ENCODE measurements at regions of chr4 and their contacts with region 1.

Region 1: DNA sequence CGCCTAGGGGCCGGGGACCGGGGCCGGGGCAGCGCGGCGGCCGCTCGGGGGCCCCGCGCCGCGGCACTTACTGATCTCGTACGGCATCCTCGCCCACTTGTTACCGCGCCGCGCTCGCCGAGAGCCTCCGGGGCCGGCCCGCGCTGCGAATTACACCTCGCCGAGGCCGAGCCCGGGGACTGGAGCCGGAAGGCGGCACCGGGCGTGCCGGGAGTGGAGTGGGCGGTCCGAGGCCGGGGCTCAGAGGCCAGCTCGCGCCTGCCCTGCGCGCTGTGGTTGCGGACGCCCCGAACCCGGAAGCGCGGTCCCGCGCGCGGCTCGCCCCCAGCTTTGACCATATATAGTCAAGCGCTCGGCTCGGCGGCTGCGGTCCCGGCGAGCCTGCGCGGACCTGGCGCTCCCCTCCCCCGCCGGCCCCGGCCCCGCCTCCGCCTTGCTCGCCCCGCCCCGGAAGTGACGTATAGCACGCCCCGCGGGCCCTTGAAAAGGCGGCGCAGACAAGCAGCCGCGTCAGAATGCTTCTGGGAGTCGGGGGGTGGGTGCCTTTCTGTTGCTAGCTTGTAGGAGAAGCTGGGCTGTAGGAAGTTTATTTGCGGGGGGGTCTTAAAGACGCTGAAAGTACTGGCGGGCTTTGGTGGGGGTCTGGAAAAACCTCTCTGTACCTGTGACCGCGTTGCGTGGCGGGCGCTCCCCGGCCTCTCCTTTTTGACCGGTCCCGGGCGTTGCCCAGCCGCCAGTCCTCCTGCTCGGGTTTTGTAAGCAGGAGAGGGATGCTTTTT is at the start of gene WDR1:
- DNase-seq: peak; percentile 95
- ATAC-seq: peak; percentile 85
- H3K4me3 ChIP-seq: peak within 1 kb of the TSS; percentile 74 to 90 (median 82)
- H3K4me3 Mint-ChIP-seq: peak within 1 kb of the TSS; percentile 95
- H3K27ac ChIP-seq: peak within 1 kb of the TSS; percentile 98
- H3K27ac Mint-ChIP-seq: peak within 1 kb of the TSS; percentile 96
- H3K4me1 ChIP-seq: peaks cover 27 to 50% of the 10 kb centered on the region in 2 donors
- H3K4me1 Mint-ChIP-seq: peaks cover 58% of the 10 kb centered on the region
- H3K27me3 ChIP-seq: no peaks in the 10 kb centered on the region
- H3K27me3 Mint-ChIP-seq: no peaks in the 10 kb centered on the region
- CTCF ChIP-seq: no peak
- total RNA-seq, gene WDR1: 198 and 217 TPM in 2 replicates

Region 2: DNA sequence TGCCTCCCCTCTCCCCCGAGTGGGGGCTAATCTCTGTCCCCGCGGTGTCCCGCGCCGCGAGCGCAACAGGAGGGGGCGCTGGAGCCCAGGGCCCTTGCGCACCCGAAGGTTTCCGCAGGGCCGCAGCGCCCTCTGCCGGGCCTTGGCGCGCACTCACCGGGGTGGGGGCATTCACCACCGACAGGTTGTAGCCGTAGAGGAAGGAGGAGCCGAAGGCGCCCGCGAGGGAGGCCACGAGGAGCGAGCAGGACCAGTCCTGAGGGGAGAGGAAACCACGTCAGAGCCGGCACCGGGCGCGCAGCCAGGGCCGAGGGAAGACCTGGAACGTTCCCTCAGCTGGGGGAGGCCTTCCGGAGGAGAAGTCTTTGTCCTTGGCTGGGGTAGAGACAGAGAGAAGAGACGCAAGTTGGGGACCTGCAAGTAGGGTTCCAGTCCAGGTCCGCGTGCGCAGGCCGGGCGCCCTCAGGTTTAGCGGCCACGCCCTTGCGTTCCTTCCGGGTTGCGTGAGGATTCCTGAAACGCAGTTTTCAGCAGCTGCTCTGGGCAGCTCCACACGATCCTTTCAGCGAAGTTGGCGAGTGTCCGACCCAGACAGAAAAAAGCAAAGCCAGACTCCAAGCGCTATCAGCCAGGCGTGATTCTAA is 97.8 kb before region 1 on chr4:
- CTCF ChIA-PET with region 1: interaction called, 4 read pairs
- POLR2A ChIA-PET with region 1: no interaction called
- intact Hi-C with region 1: loop called (anchors 2 kb)
- DNase-seq: peak; percentile 89
- ATAC-seq: peak; percentile 98
- H3K4me3 ChIP-seq: peak overlapping the region; percentile 27 to 66 (median 64)
- H3K4me3 Mint-ChIP-seq: peak overlapping the region; percentile 91
- H3K27ac ChIP-seq: peak overlapping the region; percentile 73 to 77
- H3K27ac Mint-ChIP-seq: peak overlapping the region; percentile 89
- H3K4me1 ChIP-seq: peaks cover 22 to 42% of the 10 kb centered on the region in 2 donors
- H3K4me1 Mint-ChIP-seq: peaks cover 46% of the 10 kb centered on the region
- H3K27me3 ChIP-seq: no peaks in the 10 kb centered on the region
- H3K27me3 Mint-ChIP-seq: no peaks in the 10 kb centered on the region
- CTCF ChIP-seq: peak; percentile 98

Region 3: DNA sequence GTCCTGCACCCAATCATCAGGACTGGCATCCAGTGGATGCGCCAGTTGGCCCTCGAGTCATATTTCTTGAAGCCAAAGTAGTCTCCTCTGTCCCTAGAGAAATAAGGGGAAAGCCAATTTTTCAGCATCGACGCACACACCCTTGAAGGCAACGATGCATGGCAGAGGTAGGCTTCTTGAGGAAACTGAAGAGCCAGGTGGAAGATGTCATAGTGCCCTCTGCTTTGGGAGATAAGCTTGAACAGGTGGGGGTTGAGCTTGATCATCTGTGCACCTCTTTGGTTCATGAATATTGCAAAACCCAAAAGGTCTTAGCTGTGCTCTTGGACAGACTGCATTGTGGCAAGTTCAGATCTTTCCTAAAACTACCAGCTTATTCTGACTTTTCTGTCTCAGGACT is 34.4 kb after region 1 on chr4:
- CTCF ChIA-PET with region 1: interaction called, 14 read pairs
- POLR2A ChIA-PET with region 1: interaction called, 12 read pairs
- intact Hi-C with region 1: loop called (anchors 1 kb)
- DNase-seq: peak; percentile 86
- ATAC-seq: peak; percentile 94
- H3K4me3 ChIP-seq: no peak overlapping the region
- H3K4me3 Mint-ChIP-seq: peak overlapping the region; percentile 17
- H3K27ac ChIP-seq: no peak overlapping the region
- H3K27ac Mint-ChIP-seq: peak overlapping the region; percentile 23
- H3K4me1 ChIP-seq: peaks cover 20% of the 10 kb centered on the region in 2 donors
- H3K4me1 Mint-ChIP-seq: peaks cover 30% of the 10 kb centered on the region
- H3K27me3 ChIP-seq: peaks cover 0 to 28% (median 12%) of the 10 kb centered on the region in 4 experiments
- H3K27me3 Mint-ChIP-seq: peaks cover 40% of the 10 kb centered on the region
- CTCF ChIP-seq: no peak

Region 4: GRCh38 chr4:10413177-10413576 is 296.4 kb after region 1 on chr4:
- CTCF ChIA-PET with region 1: no interaction called
- POLR2A ChIA-PET with region 1: no interaction called
- intact Hi-C with region 1: loop called (anchors 2 kb)
- DNase-seq: peak; percentile 59
- ATAC-seq: peak; percentile 83
- H3K4me3 ChIP-seq: no peak overlapping the region
- H3K4me3 Mint-ChIP-seq: peak overlapping the region; percentile 64
- H3K27ac ChIP-seq: no peak overlapping the region
- H3K27ac Mint-ChIP-seq: peak overlapping the region; percentile 76
- H3K4me1 ChIP-seq: peaks cover 31 to 34% of the 10 kb centered on the region in 2 donors
- H3K4me1 Mint-ChIP-seq: peaks cover 47% of the 10 kb centered on the region
- H3K27me3 ChIP-seq: no peaks in the 10 kb centered on the region
- H3K27me3 Mint-ChIP-seq: no peaks in the 10 kb centered on the region
- CTCF ChIP-seq: no peak

Region 5: GRCh38 chr4:11471618-11472017 is 1354.8 kb after region 1 on chr4:
- CTCF ChIA-PET with region 1: no interaction called
- POLR2A ChIA-PET with region 1: no interaction called
- intact Hi-C with region 1: loop called (anchors 5 kb)
- DNase-seq: peak; percentile 81
- ATAC-seq: peak; percentile 82
- H3K4me3 ChIP-seq: peak overlapping the region; percentile 2 to 59 (median 53)
- H3K4me3 Mint-ChIP-seq: peak overlapping the region; percentile 86
- H3K27ac ChIP-seq: peak overlapping the region; percentile 74 to 81
- H3K27ac Mint-ChIP-seq: peak overlapping the region; percentile 96
- H3K4me1 ChIP-seq: peaks cover 39 to 42% of the 10 kb centered on the region in 2 donors
- H3K4me1 Mint-ChIP-seq: peaks cover 47% of the 10 kb centered on the region
- H3K27me3 ChIP-seq: no peaks in the 10 kb centered on the region
- H3K27me3 Mint-ChIP-seq: no peaks in the 10 kb centered on the region
- CTCF ChIP-seq: no peak

Measured in B cell (primary cell).